ENCODE measurements at regions of chr4 and their contacts with region 1.

Region 1: GRCh38 chr4:164012396-164013027 is 518.0 kb downstream of the TMA16 start:
- DNase-seq: peak in 4 of 9 donors; percentile 10 to 37 (median 26)
- ATAC-seq: peak; percentile 29
- H3K4me3 ChIP-seq: no peak overlapping the region
- H3K4me3 Mint-ChIP-seq: peak overlapping the region in 1 of 10 donors; percentile 1
- H3K27ac ChIP-seq: no peak overlapping the region
- H3K27ac Mint-ChIP-seq: no peak overlapping the region
- H3K4me1 ChIP-seq: peaks cover 0 to 6% of the 10 kb centered on the region in 2 donors
- H3K4me1 Mint-ChIP-seq: peaks cover 0 to 32% (median 18%) of the 10 kb centered on the region in 7 donors
- H3K27me3 ChIP-seq: no peaks in the 10 kb centered on the region
- H3K27me3 Mint-ChIP-seq: no peaks in the 10 kb centered on the region

Region 2: GRCh38 chr4:162497564-162498167 is 1514.8 kb before region 1 on chr4:
- CTCF ChIA-PET with region 1: no interaction called
- POLR2A ChIA-PET with region 1: no interaction called
- intact Hi-C with region 1: loop called in 1 of 2 experiments (anchors 5 kb)
- DNase-seq: peak in 6 of 9 donors; percentile 11 to 43 (median 30)
- ATAC-seq: peak; percentile 71
- H3K4me3 ChIP-seq: no peak overlapping the region
- H3K4me3 Mint-ChIP-seq: no peak overlapping the region
- H3K27ac ChIP-seq: no peak overlapping the region
- H3K27ac Mint-ChIP-seq: no peak overlapping the region
- H3K4me1 ChIP-seq: no peaks in the 10 kb centered on the region
- H3K4me1 Mint-ChIP-seq: no peaks in the 10 kb centered on the region
- H3K27me3 ChIP-seq: no peaks in the 10 kb centered on the region
- H3K27me3 Mint-ChIP-seq: peaks cover 0 to 11% (median 0%) of the 10 kb centered on the region in 5 donors

Region 3: GRCh38 chr4:163494360-163495162 is 518.0 kb before region 1 on chr4 and contains the start of gene TMA16:
- CTCF ChIA-PET with region 1: no interaction called
- POLR2A ChIA-PET with region 1: no interaction called
- intact Hi-C with region 1: loop called in 1 of 2 experiments (anchors 5 kb)
- DNase-seq: peak; percentile 56 to 87 (median 76)
- ATAC-seq: peak; percentile 89
- H3K4me3 ChIP-seq: peak within 1 kb of the TSS; percentile 94
- H3K4me3 Mint-ChIP-seq: peak within 1 kb of the TSS; percentile 92 to 100 (median 98)
- H3K27ac ChIP-seq: peak within 1 kb of the TSS; percentile 83
- H3K27ac Mint-ChIP-seq: peak within 1 kb of the TSS; percentile 78 to 99 (median 96)
- H3K4me1 ChIP-seq: peaks cover 7% of the 10 kb centered on the region in 2 donors
- H3K4me1 Mint-ChIP-seq: peaks cover 20 to 44% (median 36%) of the 10 kb centered on the region in 7 donors
- H3K27me3 ChIP-seq: no peaks in the 10 kb centered on the region
- H3K27me3 Mint-ChIP-seq: peaks cover 0 to 12% (median 5%) of the 10 kb centered on the region in 5 donors
- total RNA-seq, gene TMA16: 10.5 to 38.7 (median 20.7) TPM

Region 4: DNA sequence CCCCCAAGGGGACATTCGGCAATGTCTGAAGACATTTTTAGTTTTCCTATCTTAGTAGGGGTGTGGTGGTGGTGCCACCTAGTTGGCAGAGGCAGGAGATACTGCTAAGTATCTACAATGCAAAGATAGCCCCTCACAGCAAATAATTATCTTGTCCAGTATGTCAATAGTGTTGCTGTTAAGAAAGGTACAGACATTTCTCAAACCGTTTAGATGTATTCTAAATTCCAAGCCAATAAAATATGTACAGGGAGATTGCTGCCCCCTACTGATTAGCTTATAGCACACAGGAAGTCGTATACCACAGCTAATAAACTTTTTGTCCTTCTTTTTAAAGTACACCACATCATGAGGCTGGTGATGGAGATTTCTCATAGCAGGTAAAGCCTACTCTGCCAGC is 257.5 kb before region 1 on chr4:
- CTCF ChIA-PET with region 1: interaction called, 4 read pairs
- POLR2A ChIA-PET with region 1: no interaction called
- intact Hi-C with region 1: loop called in 1 of 2 experiments (anchors 1 kb)
- DNase-seq: peak in 5 of 9 donors; percentile 24 to 50 (median 40)
- ATAC-seq: peak; percentile 54
- H3K4me3 ChIP-seq: no peak overlapping the region
- H3K4me3 Mint-ChIP-seq: peak overlapping the region in 7 of 10 donors; percentile 6 to 67 (median 38)
- H3K27ac ChIP-seq: no peak overlapping the region
- H3K27ac Mint-ChIP-seq: no peak overlapping the region
- H3K4me1 ChIP-seq: no peaks in the 10 kb centered on the region
- H3K4me1 Mint-ChIP-seq: peaks cover 0 to 9% (median 8%) of the 10 kb centered on the region in 7 donors
- H3K27me3 ChIP-seq: no peaks in the 10 kb centered on the region
- H3K27me3 Mint-ChIP-seq: peaks cover 0 to 4% (median 0%) of the 10 kb centered on the region in 5 donors

Region 5: GRCh38 chr4:163895378-163896005 is 117.0 kb before region 1 on chr4:
- CTCF ChIA-PET with region 1: no interaction called
- POLR2A ChIA-PET with region 1: no interaction called
- intact Hi-C with region 1: loop called in 1 of 2 experiments (anchors 1 kb)
- DNase-seq: peak in 7 of 9 donors; percentile 25 to 84 (median 43)
- ATAC-seq: peak; percentile 71
- H3K4me3 ChIP-seq: no peak overlapping the region
- H3K4me3 Mint-ChIP-seq: peak overlapping the region in 8 of 10 donors; percentile 24 to 65 (median 51)
- H3K27ac ChIP-seq: no peak overlapping the region
- H3K27ac Mint-ChIP-seq: peak overlapping the region in 7 of 9 donors; percentile 22 to 85 (median 63)
- H3K4me1 ChIP-seq: peaks cover 0 to 5% of the 10 kb centered on the region in 2 donors
- H3K4me1 Mint-ChIP-seq: peaks cover 0 to 43% (median 27%) of the 10 kb centered on the region in 7 donors
- H3K27me3 ChIP-seq: no peaks in the 10 kb centered on the region
- H3K27me3 Mint-ChIP-seq: peaks cover 0 to 7% (median 0%) of the 10 kb centered on the region in 5 donors

Region 6: DNA sequence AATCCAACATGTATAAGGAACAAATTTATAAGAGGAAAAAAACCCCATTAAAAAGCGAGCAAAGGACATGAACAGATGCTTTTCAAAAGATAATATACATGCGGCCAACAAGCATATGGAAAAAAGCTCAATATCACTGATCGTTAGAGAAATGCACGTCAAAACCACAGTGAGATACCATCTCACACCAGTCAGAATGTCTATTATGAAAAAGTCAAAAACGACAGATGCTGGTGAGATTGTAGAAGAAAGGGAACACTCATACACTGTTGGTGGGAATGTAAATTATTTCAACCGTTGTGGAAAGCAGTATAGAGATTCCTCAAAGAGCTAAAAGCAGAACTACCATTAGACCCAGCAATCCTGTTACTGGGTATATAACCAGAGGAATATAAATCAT is 52.6 kb before region 1 on chr4:
- CTCF ChIA-PET with region 1: no interaction called
- POLR2A ChIA-PET with region 1: no interaction called
- intact Hi-C with region 1: no loop called
- DNase-seq: no peak
- ATAC-seq: no peak
- H3K4me3 ChIP-seq: no peak overlapping the region
- H3K4me3 Mint-ChIP-seq: no peak overlapping the region
- H3K27ac ChIP-seq: no peak overlapping the region
- H3K27ac Mint-ChIP-seq: no peak overlapping the region
- H3K4me1 ChIP-seq: no peaks in the 10 kb centered on the region
- H3K4me1 Mint-ChIP-seq: no peaks in the 10 kb centered on the region
- H3K27me3 ChIP-seq: no peaks in the 10 kb centered on the region
- H3K27me3 Mint-ChIP-seq: no peaks in the 10 kb centered on the region

Region 7: DNA sequence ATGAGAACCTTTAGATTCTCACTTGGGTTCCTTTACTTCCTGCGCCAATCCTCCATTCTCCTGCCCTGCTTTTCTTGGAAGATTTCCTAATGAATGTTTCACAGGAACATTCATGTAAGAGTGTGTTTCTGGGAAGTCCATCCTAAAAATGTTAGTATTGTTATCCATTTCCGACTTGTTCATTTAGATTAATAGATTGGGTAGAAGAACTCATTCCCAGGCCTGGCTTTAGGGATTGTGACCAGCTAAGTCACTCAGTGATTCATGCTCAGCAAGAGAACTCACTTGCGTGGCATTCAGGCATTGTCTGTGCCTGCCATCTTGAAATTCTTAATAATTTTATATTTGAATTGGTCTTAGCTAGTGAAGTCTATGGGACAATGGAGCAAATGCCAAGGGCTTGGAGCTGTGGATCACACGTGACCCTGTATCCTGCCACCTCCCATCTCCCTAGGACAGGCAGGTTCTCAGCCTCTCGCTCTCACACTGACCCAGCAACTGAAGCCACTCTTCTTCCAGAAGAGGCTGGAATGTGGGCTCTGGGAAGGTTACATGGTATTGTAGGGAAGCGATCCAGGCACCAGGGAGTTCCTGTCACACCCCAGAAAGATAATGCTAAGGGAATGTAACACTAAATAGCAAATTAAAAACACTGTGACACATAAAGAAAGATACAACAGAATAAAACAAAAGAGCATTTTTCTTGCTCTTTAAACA is 44.1 kb after region 1 on chr4:
- CTCF ChIA-PET with region 1: no interaction called
- POLR2A ChIA-PET with region 1: no interaction called
- intact Hi-C with region 1: no loop called
- DNase-seq: no peak
- ATAC-seq: no peak
- H3K4me3 ChIP-seq: no peak overlapping the region
- H3K4me3 Mint-ChIP-seq: no peak overlapping the region
- H3K27ac ChIP-seq: no peak overlapping the region
- H3K27ac Mint-ChIP-seq: no peak overlapping the region
- H3K4me1 ChIP-seq: no peaks in the 10 kb centered on the region
- H3K4me1 Mint-ChIP-seq: no peaks in the 10 kb centered on the region
- H3K27me3 ChIP-seq: no peaks in the 10 kb centered on the region
- H3K27me3 Mint-ChIP-seq: no peaks in the 10 kb centered on the region

Region 8: GRCh38 chr4:165476214-165477098 is 1463.9 kb after region 1 on chr4:
- CTCF ChIA-PET with region 1: no interaction called
- POLR2A ChIA-PET with region 1: no interaction called
- intact Hi-C with region 1: no loop called
- DNase-seq: no peak
- ATAC-seq: no peak
- H3K4me3 ChIP-seq: no peak overlapping the region
- H3K4me3 Mint-ChIP-seq: no peak overlapping the region
- H3K27ac ChIP-seq: no peak overlapping the region
- H3K27ac Mint-ChIP-seq: no peak overlapping the region
- H3K4me1 ChIP-seq: no peaks in the 10 kb centered on the region
- H3K4me1 Mint-ChIP-seq: no peaks in the 10 kb centered on the region
- H3K27me3 ChIP-seq: no peaks in the 10 kb centered on the region
- H3K27me3 Mint-ChIP-seq: peaks cover 4 to 28% (median 17%) of the 10 kb centered on the region in 5 donors

Measured in naive thymus-derived CD4-positive, alpha-beta T cell (primary cell).